ENCODE measurements at regions of chr17 and their contacts with region 1.

Region 1: DNA sequence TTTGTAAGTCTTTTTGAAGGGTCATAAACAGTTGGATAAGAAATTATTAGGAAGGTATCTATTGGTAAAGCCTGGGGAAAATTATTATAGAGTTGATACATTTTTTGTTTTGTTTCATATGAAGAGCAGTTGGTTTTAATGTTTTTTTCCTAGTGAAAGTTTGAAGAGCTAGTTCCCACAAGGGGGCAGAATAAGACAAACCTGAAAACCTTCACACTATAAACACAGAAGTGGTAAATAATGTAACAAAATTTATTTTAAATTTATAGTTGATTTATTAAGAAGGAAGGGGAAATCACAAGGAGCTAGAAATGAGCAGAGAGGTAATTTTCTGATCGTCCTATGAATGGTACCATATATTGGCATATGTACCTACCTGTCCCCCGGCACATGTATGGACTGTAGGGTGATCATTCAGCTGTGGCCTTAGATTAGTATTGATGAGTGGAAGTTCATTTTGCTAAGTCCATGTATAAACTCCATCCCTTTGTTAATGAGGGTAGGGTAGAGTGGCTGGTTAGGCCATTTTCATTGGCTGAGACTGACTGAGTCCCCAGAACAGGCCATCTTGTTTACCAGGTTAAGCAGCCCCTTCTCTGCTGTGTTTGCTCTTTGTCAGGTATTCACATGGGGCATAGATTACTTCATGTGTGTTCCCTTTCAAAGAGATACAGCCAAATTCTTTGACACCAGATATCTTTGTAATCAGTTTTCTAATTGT is 116.4 kb downstream of the TANC2 start:
- DNase-seq: no peak
- H3K4me3 ChIP-seq: no peak overlapping the region
- H3K27ac ChIP-seq: no peak overlapping the region
- H3K4me1 ChIP-seq: no peaks in the 10 kb centered on the region
- H3K27me3 ChIP-seq: no peaks in the 10 kb centered on the region
- CTCF ChIP-seq: peak in 1 of 2 experiments; percentile 22

Region 2: DNA sequence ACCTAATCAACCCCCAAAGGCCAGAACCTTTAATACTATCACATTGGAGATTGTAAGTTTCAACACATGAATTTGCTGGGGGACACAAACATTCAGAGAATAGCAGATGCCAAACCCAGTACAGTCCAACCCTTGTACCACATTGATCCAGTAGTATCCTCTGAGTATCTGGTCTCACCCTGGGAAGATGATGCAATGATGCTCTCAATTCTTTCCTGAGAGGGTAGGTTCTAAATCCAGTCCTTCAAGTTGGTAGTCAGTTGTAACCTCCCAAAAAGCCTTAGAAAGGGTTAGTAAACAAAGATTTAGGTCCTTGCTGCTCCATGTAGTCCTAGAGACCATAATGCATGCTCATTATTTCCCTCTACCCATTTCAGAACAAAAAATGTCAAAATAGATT is 132.3 kb after region 1 on chr17:
- intact Hi-C with region 1: no loop called
- DNase-seq: no peak
- H3K4me3 ChIP-seq: no peak overlapping the region
- H3K27ac ChIP-seq: no peak overlapping the region
- H3K4me1 ChIP-seq: no peaks in the 10 kb centered on the region
- H3K27me3 ChIP-seq: no peaks in the 10 kb centered on the region
- CTCF ChIP-seq: no peak

Region 3: GRCh38 chr17:63406689-63407330 is 324.4 kb after region 1 on chr17:
- intact Hi-C with region 1: loop called (anchors 5 kb)
- DNase-seq: peak in 1 of 2 donors; percentile 78
- H3K4me3 ChIP-seq: no peak overlapping the region
- H3K27ac ChIP-seq: no peak overlapping the region
- H3K4me1 ChIP-seq: no peaks in the 10 kb centered on the region
- H3K27me3 ChIP-seq: no peaks in the 10 kb centered on the region
- CTCF ChIP-seq: peak; percentile 81 to 85